Activated B cell treated with CpG ODN at 0.5 μM for 24 hours (primary cell): ENCODE measurements at regions of chr3 and their contacts with region 1.

Region 1: DNA sequence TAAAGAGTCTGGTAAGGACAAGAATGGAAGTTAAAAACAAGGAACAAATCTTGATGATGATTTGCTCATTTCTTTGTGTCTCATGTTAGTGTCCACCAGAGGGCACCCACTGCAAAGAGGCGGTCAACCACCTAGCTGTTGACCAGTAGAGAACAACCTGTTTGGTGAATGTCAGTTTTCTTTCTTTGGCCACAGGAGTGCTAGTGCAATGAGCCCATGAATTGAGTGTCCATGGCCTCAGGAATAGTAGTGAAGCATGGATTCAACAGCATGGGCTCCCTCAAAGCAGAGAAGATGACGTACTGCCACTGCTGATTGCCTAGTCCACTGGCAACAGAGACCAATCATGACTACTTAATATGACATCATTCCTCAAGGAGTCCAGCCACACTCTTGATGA is 10.7 kb upstream of the CNTN6 start:
- DNase-seq: no peak
- ATAC-seq: no peak
- H3K4me3 Mint-ChIP-seq: no peak overlapping the region
- H3K27ac Mint-ChIP-seq: no peak overlapping the region
- H3K4me1 Mint-ChIP-seq: no peaks in the 10 kb centered on the region
- H3K27me3 Mint-ChIP-seq: no peaks in the 10 kb centered on the region
- CTCF ChIP-seq: no peak

Region 2: GRCh38 chr3:414063-414462 is 668.0 kb before region 1 on chr3:
- CTCF ChIA-PET with region 1: no interaction called
- POLR2A ChIA-PET with region 1: no interaction called
- intact Hi-C with region 1: loop called (anchors 10 kb)
- DNase-seq: no peak
- ATAC-seq: no peak
- H3K4me3 Mint-ChIP-seq: no peak overlapping the region
- H3K27ac Mint-ChIP-seq: no peak overlapping the region
- H3K4me1 Mint-ChIP-seq: no peaks in the 10 kb centered on the region
- H3K27me3 Mint-ChIP-seq: no peaks in the 10 kb centered on the region
- CTCF ChIP-seq: no peak

Region 3: GRCh38 chr3:1987980-1988379 is 905.9 kb after region 1 on chr3:
- CTCF ChIA-PET with region 1: no interaction called
- POLR2A ChIA-PET with region 1: no interaction called
- intact Hi-C with region 1: loop called (anchors 10 kb)
- DNase-seq: no peak
- ATAC-seq: no peak
- H3K4me3 Mint-ChIP-seq: no peak overlapping the region
- H3K27ac Mint-ChIP-seq: no peak overlapping the region
- H3K4me1 Mint-ChIP-seq: no peaks in the 10 kb centered on the region
- H3K27me3 Mint-ChIP-seq: no peaks in the 10 kb centered on the region
- CTCF ChIP-seq: no peak

Region 4: DNA sequence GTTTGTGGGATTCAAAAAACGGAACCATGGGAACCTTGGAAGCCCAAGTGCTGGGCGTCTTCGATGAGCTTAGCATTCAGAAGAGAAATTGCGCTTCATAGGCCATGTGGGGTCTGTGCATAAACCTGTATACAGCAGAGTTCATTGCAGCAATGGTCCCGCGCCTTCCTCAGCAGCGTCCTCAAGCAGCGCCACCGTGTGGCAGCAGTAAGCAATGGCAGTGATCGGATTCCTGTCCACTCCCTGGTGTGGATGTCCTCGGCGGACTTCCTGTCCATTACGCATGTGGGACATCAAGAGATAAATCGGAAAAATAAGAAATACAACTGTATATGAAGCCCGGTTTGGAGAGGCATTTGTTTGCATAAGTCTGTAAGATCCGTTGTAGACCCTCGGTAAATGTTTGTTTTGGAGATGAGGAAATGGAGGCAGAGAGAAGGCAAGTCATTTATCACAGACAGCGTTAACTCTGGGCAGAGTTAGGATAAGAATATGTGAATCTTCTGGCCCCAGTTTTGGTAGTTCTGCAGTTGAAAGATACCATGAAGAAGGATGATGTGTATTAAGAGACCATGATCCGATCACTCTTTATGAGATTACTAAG is 1074.2 kb after region 1 on chr3:
- CTCF ChIA-PET with region 1: no interaction called
- POLR2A ChIA-PET with region 1: no interaction called
- intact Hi-C with region 1: loop called (anchors 10 kb)
- DNase-seq: no peak
- ATAC-seq: no peak
- H3K4me3 Mint-ChIP-seq: no peak overlapping the region
- H3K27ac Mint-ChIP-seq: no peak overlapping the region
- H3K4me1 Mint-ChIP-seq: no peaks in the 10 kb centered on the region
- H3K27me3 Mint-ChIP-seq: no peaks in the 10 kb centered on the region
- CTCF ChIP-seq: no peak

Region 5: GRCh38 chr3:2921903-2922302 is 1839.8 kb after region 1 on chr3:
- CTCF ChIA-PET with region 1: no interaction called
- POLR2A ChIA-PET with region 1: no interaction called
- intact Hi-C with region 1: loop called (anchors 5 kb)
- DNase-seq: no peak
- ATAC-seq: peak; percentile 40
- H3K4me3 Mint-ChIP-seq: no peak overlapping the region
- H3K27ac Mint-ChIP-seq: no peak overlapping the region
- H3K4me1 Mint-ChIP-seq: peaks cover 2% of the 10 kb centered on the region
- H3K27me3 Mint-ChIP-seq: no peaks in the 10 kb centered on the region
- CTCF ChIP-seq: no peak